B cell (primary cell): ENCODE measurements at regions of chr17 and their contacts with region 1.

Region 1: DNA sequence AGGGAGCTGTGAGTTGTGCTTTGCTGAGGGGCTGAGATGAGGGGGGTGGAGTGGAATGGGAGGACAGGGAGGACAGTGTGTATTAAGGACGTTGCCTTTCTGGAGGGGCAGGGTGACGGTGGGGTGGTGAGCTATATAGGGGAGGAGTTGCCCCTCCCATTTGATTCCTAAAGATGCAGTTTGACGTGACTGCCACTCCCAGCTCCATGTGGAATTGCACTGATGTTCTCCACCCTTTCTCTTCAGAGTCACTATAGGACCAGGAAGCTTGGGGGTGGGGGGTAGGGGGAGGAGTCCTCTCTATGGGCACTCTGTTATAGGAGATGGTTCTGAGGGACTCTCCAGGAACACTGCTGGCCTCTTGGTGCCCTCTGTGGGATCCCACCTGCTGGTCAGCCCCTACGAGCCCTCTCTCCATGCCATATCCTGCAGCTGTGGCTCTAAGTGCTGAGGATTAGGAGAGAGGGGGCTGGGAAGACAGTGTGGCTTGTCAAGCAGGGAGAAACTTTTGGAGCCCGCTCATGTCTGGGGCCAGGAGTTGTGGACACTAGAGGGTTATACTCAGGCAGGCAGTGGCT is 3.8 kb upstream of the NGFR start:
- DNase-seq: no peak
- ATAC-seq: no peak
- H3K4me3 ChIP-seq: no peak overlapping the region
- H3K4me3 Mint-ChIP-seq: no peak overlapping the region
- H3K27ac ChIP-seq: no peak overlapping the region
- H3K27ac Mint-ChIP-seq: no peak overlapping the region
- H3K4me1 ChIP-seq: peaks cover 10 to 16% of the 10 kb centered on the region in 2 donors
- H3K4me1 Mint-ChIP-seq: peaks cover 15% of the 10 kb centered on the region
- H3K27me3 ChIP-seq: peaks cover 0 to 18% (median 6%) of the 10 kb centered on the region in 4 experiments
- H3K27me3 Mint-ChIP-seq: peaks cover 37% of the 10 kb centered on the region
- CTCF ChIP-seq: no peak

Region 2: DNA sequence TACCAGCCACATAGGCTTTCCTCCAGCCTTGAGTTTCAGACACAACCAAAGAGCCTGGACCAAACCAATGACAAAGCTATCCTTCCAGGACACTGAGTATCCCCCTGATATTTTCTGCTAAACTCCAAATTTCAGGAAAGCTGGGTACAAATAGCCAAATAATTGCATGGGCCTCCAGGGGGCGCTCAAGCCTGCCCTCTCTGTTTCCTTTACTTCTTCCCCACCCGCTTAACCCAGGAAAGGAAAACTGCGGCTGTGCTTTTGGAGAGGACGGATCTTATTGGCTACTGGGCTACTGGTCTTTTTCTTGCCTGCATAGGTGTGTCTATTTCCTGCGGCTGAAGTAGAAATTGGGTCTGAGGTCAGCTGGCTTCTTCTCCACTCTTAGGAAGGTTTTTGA is 311.0 kb before region 1 on chr17:
- CTCF ChIA-PET with region 1: no interaction called
- POLR2A ChIA-PET with region 1: no interaction called
- intact Hi-C with region 1: no loop called
- DNase-seq: peak; percentile 77
- ATAC-seq: peak; percentile 53
- H3K4me3 ChIP-seq: no peak overlapping the region
- H3K4me3 Mint-ChIP-seq: no peak overlapping the region
- H3K27ac ChIP-seq: no peak overlapping the region
- H3K27ac Mint-ChIP-seq: no peak overlapping the region
- H3K4me1 ChIP-seq: peaks cover 0 to 4% of the 10 kb centered on the region in 2 donors
- H3K4me1 Mint-ChIP-seq: peaks cover 2% of the 10 kb centered on the region
- H3K27me3 ChIP-seq: peaks cover 0 to 8% (median 3%) of the 10 kb centered on the region in 4 experiments
- H3K27me3 Mint-ChIP-seq: peaks cover 4% of the 10 kb centered on the region
- CTCF ChIP-seq: peak; percentile 86

Region 3: DNA sequence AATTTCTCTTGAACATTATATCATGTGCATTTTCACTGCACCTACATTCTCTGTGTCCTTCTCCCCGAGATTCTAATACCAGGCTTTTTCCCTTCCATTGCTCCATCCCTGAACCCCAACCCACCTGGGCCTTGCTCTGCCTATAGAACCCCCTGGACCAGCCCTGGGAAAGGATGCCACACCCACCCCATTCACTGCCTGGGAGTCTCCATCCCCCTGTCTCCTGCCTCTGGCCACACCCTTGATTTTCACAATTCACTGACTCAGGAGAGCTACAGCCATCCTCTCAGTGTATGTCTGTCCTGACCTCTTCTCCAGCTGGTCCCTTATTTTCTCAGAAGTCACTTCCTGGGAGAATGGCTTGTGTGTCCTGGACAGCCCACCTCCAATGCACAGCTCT is 24.1 kb before region 1 on chr17:
- CTCF ChIA-PET with region 1: interaction called, 6 read pairs
- POLR2A ChIA-PET with region 1: interaction called, 11 read pairs
- intact Hi-C with region 1: no loop called
- DNase-seq: no peak
- ATAC-seq: no peak
- H3K4me3 ChIP-seq: no peak overlapping the region
- H3K4me3 Mint-ChIP-seq: no peak overlapping the region
- H3K27ac ChIP-seq: no peak overlapping the region
- H3K27ac Mint-ChIP-seq: no peak overlapping the region
- H3K4me1 ChIP-seq: peaks cover 9 to 10% of the 10 kb centered on the region in 2 donors
- H3K4me1 Mint-ChIP-seq: peaks cover 4% of the 10 kb centered on the region
- H3K27me3 ChIP-seq: peaks cover 0 to 67% (median 21%) of the 10 kb centered on the region in 4 experiments
- H3K27me3 Mint-ChIP-seq: peaks cover 78% of the 10 kb centered on the region
- CTCF ChIP-seq: no peak